ENCODE measurements at regions of chr1 and their contacts with region 1.

Region 1: DNA sequence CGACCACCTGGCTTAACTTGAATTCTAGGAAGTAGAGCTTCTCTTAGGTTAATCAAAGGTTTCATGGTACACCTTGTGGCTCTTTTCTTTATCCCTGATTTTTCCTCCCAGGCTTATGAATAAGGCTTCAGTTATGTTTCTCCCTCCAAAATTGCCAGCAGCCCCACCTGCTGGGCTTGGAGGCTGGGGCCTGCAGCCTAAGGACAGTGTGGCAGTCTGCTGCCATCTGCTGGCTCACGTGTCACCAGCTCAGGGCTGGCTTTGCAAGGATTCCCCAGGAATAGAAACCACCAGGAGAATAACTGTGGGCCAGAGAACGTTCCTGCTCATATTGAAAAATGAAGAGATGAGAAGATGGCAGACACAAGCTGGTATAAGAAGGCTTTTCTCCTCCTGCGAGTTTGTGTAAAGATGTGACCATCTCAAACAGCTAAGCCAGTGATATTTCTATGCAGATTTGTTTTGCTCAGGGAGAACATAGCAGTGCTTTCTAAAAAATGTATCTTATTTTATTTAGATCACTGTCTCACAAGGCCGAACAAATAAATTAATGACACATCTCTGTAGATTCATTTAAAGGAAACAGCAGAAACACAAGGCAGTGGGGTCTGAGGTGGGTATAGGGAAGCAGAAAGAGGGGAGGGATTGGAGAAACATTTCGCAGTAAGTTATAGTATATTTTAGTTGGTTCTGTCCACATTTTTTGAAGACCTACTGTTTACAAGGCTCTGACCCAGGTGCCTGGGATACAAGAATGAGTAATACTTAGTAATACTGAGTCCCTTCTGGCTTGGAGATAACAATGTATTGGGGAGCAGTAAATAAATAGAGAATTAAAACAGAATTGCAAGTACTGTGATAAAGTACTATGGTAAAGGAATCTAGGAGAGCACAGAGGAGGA is 291.1 kb upstream of the SGIP1 start:
- H3K4me3 ChIP-seq: no peak overlapping the region
- H3K27ac ChIP-seq: no peak overlapping the region
- H3K4me1 ChIP-seq: no peaks in the 10 kb centered on the region; the same call in 1 of the 2 replicates
- CTCF ChIP-seq: peak; percentile 97

Region 2: DNA sequence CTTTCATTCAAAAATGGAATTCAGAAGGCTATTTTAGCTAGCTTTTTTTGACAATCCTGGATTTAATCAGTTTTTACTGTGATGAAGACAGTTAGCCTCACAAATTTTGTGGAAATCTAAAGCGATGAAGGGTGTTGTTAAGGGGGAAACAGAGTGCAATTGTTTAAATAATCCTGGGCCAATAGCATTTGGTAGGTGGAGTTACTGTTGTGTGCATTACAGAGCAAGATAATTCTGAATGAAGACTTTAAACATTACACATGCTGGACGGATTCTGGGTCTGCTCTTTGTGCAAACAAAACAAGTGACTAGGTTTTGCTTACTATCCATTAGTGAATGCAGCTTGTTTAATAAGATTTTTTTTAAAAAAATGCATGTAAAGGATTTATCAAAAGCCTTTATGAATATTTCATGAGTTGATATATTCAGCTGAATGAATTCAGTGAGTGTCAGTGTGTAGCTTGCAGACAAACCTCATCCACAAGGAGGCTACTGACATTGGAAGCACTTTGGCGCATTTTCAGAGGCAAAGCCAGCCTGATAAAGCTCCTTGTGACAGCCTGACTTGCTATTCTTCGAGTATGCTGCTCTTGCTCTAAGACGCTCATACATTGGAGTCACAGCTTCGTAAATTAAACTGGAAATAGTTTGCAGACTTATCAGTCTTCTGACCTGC is 250.6 kb before region 1 on chr1:
- CTCF ChIA-PET with region 1: interaction called, 20 read pairs
- POLR2A ChIA-PET with region 1: no interaction called
- H3K4me3 ChIP-seq: no peak overlapping the region
- H3K27ac ChIP-seq: no peak overlapping the region
- H3K4me1 ChIP-seq: no peaks in the 10 kb centered on the region
- CTCF ChIP-seq: no peak

Region 3: GRCh38 chr1:66217021-66217420 is 25.9 kb before region 1 on chr1:
- CTCF ChIA-PET with region 1: interaction called, 10 read pairs
- POLR2A ChIA-PET with region 1: no interaction called
- H3K4me3 ChIP-seq: no peak overlapping the region
- H3K27ac ChIP-seq: no peak overlapping the region
- H3K4me1 ChIP-seq: no peaks in the 10 kb centered on the region
- CTCF ChIP-seq: no peak

Region 4: GRCh38 chr1:66231217-66231616 is 11.7 kb before region 1 on chr1:
- CTCF ChIA-PET with region 1: interaction called, 17 read pairs
- POLR2A ChIA-PET with region 1: no interaction called
- H3K4me3 ChIP-seq: no peak overlapping the region
- H3K27ac ChIP-seq: no peak overlapping the region
- H3K4me1 ChIP-seq: no peaks in the 10 kb centered on the region
- CTCF ChIP-seq: no peak

Region 5: DNA sequence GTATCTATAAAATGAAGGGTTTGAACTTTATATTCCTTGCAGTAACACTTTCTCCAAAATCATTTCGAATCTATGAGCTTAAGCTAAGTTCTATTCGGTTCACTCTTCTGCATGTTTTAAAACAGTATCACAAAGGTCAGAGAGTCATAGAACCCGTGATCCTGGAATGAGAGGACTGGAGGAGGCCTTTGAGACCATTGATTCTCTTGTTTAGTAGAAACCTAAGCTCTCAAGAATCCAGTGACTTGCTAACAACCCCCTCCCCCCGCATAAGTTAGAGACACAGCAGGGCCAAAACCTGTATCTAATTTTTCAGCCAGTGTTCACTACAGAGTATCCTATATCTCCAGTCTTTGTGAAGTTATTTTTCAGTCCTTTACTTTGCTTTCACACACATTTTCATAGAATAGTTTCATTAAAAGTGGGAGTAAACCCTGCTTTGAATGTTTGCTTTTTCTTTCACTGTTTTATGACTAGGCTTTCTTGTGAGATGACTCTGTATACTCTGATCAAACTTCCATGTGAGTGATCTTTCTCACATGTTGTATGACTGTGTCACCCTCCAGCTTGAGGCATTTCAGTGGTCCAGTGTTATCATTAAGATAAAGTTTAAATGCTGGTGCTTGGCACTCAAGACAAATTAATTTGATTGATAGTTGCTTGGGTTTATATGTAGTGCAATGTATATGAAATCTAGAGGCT is 15.7 kb after region 1 on chr1:
- CTCF ChIA-PET with region 1: interaction called, 17 read pairs
- POLR2A ChIA-PET with region 1: no interaction called
- H3K4me3 ChIP-seq: no peak overlapping the region
- H3K27ac ChIP-seq: no peak overlapping the region
- H3K4me1 ChIP-seq: no peaks in the 10 kb centered on the region
- CTCF ChIP-seq: no peak

Region 6: DNA sequence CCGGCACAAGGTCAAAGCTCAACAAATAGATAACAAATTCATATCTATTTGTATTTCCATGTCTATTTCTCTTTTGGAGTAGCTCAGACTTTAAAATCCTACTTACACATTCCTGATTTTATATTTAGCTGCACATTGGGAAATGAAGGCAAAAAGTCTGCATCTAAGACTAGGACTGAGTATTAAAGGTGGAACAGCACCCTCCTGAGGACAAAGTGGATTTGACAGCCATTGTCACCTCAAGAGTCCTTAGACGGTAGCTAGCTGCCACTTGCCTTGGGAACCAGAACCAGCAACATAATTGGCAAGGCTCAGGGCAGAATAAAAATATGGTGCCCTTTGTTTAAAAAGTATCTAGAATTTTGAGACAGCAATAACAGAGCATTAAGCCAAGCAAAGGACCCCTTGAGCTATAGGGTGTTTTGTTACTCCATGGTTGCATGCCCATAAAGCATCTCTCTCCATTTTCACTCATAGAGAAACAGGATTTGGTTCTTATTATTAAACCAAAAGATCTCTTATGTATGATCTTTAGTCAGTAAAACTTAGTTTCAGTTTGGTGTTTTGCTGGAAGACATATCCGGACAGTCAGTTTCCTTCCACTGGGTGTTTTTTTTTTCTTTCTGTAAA is 261.1 kb after region 1 on chr1:
- CTCF ChIA-PET with region 1: interaction called, 10 read pairs
- POLR2A ChIA-PET with region 1: no interaction called
- H3K4me3 ChIP-seq: no peak overlapping the region
- H3K27ac ChIP-seq: no peak overlapping the region
- H3K4me1 ChIP-seq: no peaks in the 10 kb centered on the region
- CTCF ChIP-seq: peak; percentile 42; the same call in 1 of the 2 replicates